Sigmoid colon (tissue), 7 donors: ENCODE measurements at regions of chr13 and their contacts with region 1.

Region 1: DNA sequence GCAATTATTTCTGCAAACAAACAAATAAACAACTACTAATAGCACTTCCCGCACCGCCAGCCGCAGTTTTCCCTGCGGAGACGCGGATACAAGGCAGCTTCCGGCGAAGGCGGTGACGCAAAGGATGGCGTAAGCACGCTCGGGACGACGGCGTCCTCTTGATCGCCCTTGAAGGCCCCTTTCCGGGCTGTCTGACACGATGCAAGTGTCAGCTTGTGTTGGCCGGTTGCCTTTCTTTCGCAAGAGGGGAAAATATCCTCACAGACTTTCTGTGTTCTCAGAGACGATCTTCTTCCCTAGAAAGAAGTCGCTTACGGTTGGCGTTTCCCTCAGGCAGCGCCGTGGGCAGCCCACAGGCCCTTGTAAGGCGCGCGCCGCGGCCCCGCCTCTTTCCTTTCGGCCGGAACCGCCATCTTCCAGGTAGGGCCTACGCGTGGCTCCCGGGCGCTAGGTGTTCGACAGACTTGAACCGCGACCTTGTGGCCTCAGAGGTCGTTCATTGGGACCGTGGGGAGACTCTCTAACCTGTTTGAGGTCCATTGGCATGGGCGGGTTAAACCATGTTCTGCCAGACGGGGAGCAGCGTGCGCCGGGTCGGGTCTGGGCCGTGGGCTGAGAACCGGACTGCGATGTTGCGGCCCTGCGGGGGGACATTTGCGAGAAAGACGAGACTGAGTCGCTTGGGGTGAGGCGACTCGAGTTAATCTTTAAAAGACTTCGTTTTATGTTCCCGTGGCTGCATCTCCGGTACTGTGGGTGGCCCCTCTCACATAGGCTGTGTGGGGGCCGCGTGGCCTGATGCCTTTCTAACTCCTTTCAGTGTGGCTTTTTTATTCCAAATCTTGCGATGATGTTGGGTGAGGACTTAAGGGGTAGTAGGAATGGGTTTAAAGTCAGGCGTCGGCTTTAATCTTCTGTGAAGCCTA is at the start of gene RPL21:
- DNase-seq: peak; percentile 98
- H3K4me3 ChIP-seq: peak within 1 kb of the TSS; percentile 62 to 86 (median 68)
- H3K27ac ChIP-seq: peak within 1 kb of the TSS; percentile 88 to 96 (median 92)
- H3K4me1 ChIP-seq: peaks cover 0 to 44% (median 36%) of the 10 kb centered on the region in 4 donors
- H3K27me3 ChIP-seq: no peaks in the 10 kb centered on the region
- CTCF ChIP-seq: no peak
- EP300 ChIP-seq: peak in 3 of 4 donors; percentile 25 to 87 (median 86)
- POLR2A ChIP-seq: peak; percentile 84 to 91
- total RNA-seq, gene RPL21: 708 to 2,145 (median 1,875) TPM

Region 2: GRCh38 chr13:27022571-27023311 is 228.7 kb before region 1 on chr13:
- intact Hi-C with region 1: loop called (anchors 5 kb)
- DNase-seq: peak; percentile 85
- H3K4me3 ChIP-seq: no peak overlapping the region
- H3K27ac ChIP-seq: peak overlapping the region; percentile 73 to 85 (median 82)
- H3K4me1 ChIP-seq: peaks cover 0 to 70% (median 59%) of the 10 kb centered on the region in 4 donors
- H3K27me3 ChIP-seq: peaks cover 0 to 3% (median 0%) of the 10 kb centered on the region in 3 donors
- CTCF ChIP-seq: no peak
- EP300 ChIP-seq: peak; percentile 35 to 89 (median 66)
- POLR2A ChIP-seq: no peak

Region 3: GRCh38 chr13:27270594-27271520 is 19.4 kb after region 1 on chr13 and contains the start of gene RASL11A:
- intact Hi-C with region 1: loop called (anchors 1 kb)
- DNase-seq: peak; percentile 95
- H3K4me3 ChIP-seq: peak within 1 kb of the TSS; percentile 73 to 85 (median 79)
- H3K27ac ChIP-seq: peak within 1 kb of the TSS; percentile 92 to 96 (median 96)
- H3K4me1 ChIP-seq: peaks cover 0 to 41% (median 34%) of the 10 kb centered on the region in 4 donors
- H3K27me3 ChIP-seq: no peaks in the 10 kb centered on the region
- CTCF ChIP-seq: peak; percentile 77 to 99 (median 86)
- EP300 ChIP-seq: no peak
- POLR2A ChIP-seq: peak; percentile 61 to 69
- total RNA-seq, gene RASL11A: 14.1 to 123 (median 18.4) TPM

Region 4: DNA sequence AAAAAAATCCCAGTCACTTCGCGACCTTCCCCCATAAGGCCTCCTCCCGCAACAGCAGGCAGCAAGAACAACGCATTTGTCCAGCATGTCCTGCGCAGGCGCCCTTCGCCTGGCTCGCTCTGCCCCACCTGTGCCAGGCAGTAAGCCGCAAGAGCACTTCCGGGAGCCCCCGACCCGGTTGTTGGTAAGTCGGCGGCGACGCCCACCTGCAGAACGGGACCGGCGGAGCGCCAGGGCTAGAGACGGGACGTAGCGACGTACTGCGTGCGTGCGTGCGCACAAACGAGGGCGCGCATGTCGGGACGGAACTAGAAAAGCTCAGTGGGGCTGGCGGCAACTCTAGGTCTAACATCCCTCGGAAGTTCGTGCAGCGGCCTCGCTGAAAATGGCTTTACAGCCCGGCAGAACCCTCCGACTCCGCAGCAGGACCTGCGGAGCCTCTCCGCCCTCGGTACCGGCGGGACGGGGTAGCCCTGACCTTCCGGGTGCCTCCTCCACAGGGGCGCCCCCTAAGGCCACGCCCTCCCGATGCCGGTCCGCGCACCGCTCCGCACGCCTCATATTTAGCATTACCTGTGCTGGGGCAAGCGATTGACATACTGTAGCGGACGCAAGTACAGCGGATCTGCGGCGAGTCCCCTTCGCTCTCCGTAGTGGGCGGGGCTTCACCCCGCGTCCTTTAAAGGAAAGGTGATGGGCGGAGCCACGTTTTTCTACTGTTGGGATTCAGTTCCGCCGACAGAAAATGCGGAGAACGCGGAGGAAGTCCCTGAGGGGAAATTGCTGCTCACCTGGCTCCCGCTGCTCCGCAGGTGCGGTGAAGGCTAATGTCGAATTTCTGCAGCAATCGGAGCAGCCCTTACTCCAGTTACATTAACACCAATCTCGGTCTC is 198.8 kb after region 1 on chr13 and contains the start of gene MTIF3:
- intact Hi-C with region 1: loop called (anchors 5 kb)
- DNase-seq: peak; percentile 96
- H3K4me3 ChIP-seq: peak within 1 kb of the TSS; percentile 68 to 98 (median 90)
- H3K27ac ChIP-seq: peak within 1 kb of the TSS; percentile 95 to 100 (median 98)
- H3K4me1 ChIP-seq: peaks cover 0 to 45% (median 28%) of the 10 kb centered on the region in 4 donors
- H3K27me3 ChIP-seq: no peaks in the 10 kb centered on the region
- CTCF ChIP-seq: peak in 1 of 4 experiments; percentile 32
- EP300 ChIP-seq: peak in 1 of 4 donors; percentile 16
- POLR2A ChIP-seq: peak; percentile 78 to 84
- total RNA-seq, gene MTIF3: 64.3 to 102 (median 74.4) TPM

Region 5: DNA sequence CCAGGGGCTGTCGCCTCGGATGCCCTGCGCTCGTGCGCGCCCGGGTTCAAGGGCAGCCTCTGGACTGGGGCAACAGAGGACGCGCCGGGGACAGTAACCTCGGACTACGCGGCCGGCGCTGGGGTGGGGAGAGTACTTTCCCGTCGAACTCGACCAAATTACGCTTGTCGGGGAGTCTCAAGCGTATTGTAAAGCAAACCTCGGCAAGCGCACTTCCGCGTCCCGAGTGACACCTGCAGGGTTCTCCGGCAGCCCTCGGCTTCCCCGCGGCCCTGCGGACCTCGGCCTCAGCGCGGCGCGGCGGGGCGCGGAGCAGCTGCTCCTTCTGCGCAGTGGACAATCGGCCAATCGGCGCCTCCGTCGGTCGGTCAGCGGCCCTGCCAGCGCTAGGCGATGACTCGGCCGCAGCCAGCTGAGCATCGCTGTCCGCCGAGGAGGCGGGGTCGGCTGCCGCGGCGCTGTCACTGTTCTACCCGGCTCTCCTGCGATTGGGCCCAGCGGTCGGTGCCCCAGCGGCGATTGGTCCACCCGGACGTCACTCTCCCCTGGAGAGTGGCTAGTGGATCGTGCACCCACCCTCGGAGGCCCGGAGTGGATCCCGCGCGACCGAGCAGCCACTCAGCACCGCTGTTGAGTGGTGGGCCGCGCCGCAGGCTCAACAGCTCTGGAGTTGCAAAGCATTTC is 1467.3 kb after region 1 on chr13 and contains the start of gene SLC46A3:
- intact Hi-C with region 1: loop called (anchors 5 kb)
- DNase-seq: peak; percentile 99
- H3K4me3 ChIP-seq: peak within 1 kb of the TSS; percentile 67 to 75 (median 74)
- H3K27ac ChIP-seq: peak within 1 kb of the TSS; percentile 90 to 98 (median 93)
- H3K4me1 ChIP-seq: peaks cover 0 to 21% (median 16%) of the 10 kb centered on the region in 4 donors
- H3K27me3 ChIP-seq: no peaks in the 10 kb centered on the region
- CTCF ChIP-seq: no peak
- EP300 ChIP-seq: no peak
- POLR2A ChIP-seq: peak; percentile 21 to 47
- total RNA-seq, gene SLC46A3: 14.1 to 18.2 (median 15.1) TPM